Common myeloid progenitor, CD34-positive (primary cell): ENCODE measurements at regions of chr20 and their contacts with region 1.

Region 1: DNA sequence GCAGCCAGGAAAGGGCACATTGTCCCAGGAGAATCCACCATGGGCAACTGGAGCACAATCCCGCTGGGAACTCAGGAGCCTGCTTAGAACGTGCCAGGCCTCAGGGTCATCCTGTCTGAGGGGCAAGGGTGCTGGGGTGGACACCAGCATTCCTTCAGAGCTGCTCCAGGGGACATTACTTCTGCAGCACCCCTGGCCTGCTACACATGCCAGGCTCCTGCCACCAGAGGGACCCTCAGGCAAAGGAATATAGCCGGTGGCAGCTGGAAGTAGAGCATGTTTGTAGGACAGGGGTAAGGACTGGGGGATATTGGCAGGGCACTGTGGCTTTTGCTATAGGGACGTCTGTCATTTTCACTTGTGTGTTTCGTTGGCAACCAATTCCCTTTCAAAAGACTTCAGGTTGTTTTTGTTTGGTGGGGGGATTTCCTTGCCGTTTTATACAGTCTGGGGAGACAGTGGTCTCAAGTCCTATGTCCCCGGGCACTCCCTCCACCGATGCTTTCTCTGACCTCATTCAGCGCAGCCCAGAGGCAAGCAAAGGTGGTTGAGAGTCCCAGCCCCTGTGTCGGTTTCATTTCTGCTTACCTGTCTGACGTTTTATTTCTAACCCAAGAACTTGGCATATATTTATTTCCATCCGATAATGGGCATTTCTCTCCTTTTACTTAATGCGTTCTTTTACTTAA is 130.8 kb downstream of the JPH2 start:
- DNase-seq: peak; percentile 53 to 73 (median 68)
- H3K4me3 ChIP-seq: no peak overlapping the region
- H3K27ac ChIP-seq: no peak overlapping the region
- H3K4me1 ChIP-seq: no peaks in the 10 kb centered on the region
- H3K27me3 ChIP-seq: peaks cover 0 to 11% (median 2%) of the 10 kb centered on the region in 5 experiments

Region 2: DNA sequence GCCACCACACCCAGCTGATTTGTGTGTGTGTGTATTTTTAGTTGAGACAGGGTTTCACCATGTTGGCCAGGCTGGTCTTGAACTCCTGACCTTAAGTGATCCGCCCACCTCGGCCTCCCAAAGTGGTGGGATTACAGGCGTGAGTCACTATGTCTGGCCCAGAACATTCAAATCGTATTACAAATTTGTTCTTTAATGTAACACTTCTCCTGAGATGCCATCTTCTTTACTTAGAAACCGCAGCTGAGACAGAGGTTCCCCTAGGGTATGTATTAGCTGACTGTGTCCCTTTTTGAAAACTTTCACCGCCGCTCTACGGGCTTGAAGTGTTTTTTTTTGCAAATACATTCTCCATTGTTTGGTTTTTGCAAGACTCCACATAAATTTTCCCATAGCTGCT is 78.9 kb before region 1 on chr20:
- CTCF ChIA-PET with region 1: no interaction called
- POLR2A ChIA-PET with region 1: no interaction called
- DNase-seq: no peak
- H3K4me3 ChIP-seq: no peak overlapping the region
- H3K27ac ChIP-seq: no peak overlapping the region
- H3K4me1 ChIP-seq: no peaks in the 10 kb centered on the region
- H3K27me3 ChIP-seq: peaks cover 0 to 50% (median 7%) of the 10 kb centered on the region in 5 experiments

Region 3: GRCh38 chr20:44074252-44075151 is 18.3 kb after region 1 on chr20:
- CTCF ChIA-PET with region 1: interaction called, 83 read pairs
- POLR2A ChIA-PET with region 1: interaction called, 4 read pairs
- DNase-seq: peak in 1 of 3 donors; percentile 6
- H3K4me3 ChIP-seq: no peak overlapping the region
- H3K27ac ChIP-seq: no peak overlapping the region
- H3K4me1 ChIP-seq: peaks cover 3 to 18% (median 11%) of the 10 kb centered on the region in 4 experiments
- H3K27me3 ChIP-seq: peaks cover 0 to 15% (median 3%) of the 10 kb centered on the region in 5 experiments

Region 4: GRCh38 chr20:44217342-44218092 is 161.4 kb after region 1 on chr20:
- CTCF ChIA-PET with region 1: no interaction called
- POLR2A ChIA-PET with region 1: no interaction called
- DNase-seq: peak; percentile 79 to 91 (median 86)
- H3K4me3 ChIP-seq: peak overlapping the region in 6 of 7 experiments; percentile 27 to 65 (median 40)
- H3K27ac ChIP-seq: no peak overlapping the region
- H3K4me1 ChIP-seq: peaks cover 18 to 32% (median 29%) of the 10 kb centered on the region in 4 experiments
- H3K27me3 ChIP-seq: no peaks in the 10 kb centered on the region